Activated naive CD4-positive, alpha-beta T cell treated with anti-CD3 and anti-CD28 coated beads for 36 hours (primary cell): ENCODE measurements at regions of chrX and their contacts with region 1.

Region 1: GRCh38 chrX:16603822-16604221 is 46.1 kb upstream of the S100G start:
- DNase-seq: peak; percentile 31
- H3K4me3 Mint-ChIP-seq: peak overlapping the region; percentile 28
- H3K27ac Mint-ChIP-seq: peak overlapping the region; percentile 82
- H3K4me1 Mint-ChIP-seq: peaks cover 33% of the 10 kb centered on the region
- H3K27me3 Mint-ChIP-seq: no peaks in the 10 kb centered on the region

Region 2: DNA sequence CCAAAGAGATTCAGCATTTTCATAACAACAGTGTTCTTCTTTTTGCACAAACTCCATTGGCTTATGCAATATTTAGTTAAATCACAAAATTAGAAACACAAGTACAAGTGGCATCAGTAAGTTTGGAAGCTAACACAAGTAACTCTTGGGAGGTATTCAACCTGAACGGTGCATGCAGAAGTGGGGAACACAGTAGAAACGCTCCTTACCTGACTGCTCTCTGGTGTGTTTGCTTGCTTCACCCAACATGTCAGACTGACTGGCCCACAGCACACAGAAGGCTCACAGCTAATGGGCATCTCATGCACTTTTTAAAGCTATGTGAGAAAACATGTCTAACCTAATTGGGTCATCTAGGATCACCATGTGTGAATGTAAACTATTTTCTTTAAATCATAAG is 303.0 kb before region 1 on chrX:
- CTCF ChIA-PET with region 1: no interaction called
- intact Hi-C with region 1: no loop called
- DNase-seq: no peak
- H3K4me3 Mint-ChIP-seq: no peak overlapping the region
- H3K27ac Mint-ChIP-seq: no peak overlapping the region
- H3K4me1 Mint-ChIP-seq: no peaks in the 10 kb centered on the region
- H3K27me3 Mint-ChIP-seq: peaks cover 4% of the 10 kb centered on the region

Region 3: GRCh38 chrX:16462912-16463311 is 140.9 kb before region 1 on chrX:
- CTCF ChIA-PET with region 1: no interaction called
- intact Hi-C with region 1: no loop called
- DNase-seq: no peak
- H3K4me3 Mint-ChIP-seq: no peak overlapping the region
- H3K27ac Mint-ChIP-seq: no peak overlapping the region
- H3K4me1 Mint-ChIP-seq: no peaks in the 10 kb centered on the region
- H3K27me3 Mint-ChIP-seq: no peaks in the 10 kb centered on the region

Region 4: DNA sequence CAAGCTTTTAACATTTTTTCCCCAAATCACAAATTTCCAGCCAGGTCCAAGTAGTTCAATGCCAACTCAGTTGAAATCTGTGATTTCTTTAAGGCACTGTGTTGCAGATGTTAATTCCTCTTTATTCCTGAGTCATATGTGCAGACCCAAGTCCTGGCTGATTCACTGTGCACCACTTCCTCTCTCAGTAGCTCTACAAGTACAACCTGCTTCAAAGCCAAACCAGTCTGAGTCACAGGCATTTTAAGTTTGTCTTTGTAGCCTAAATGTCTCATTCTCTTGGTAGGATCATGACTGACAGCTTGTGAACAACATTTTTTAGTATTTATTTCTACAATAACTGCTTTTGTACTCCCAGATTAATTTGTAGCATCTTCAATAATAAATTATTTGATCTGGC is 119.5 kb before region 1 on chrX:
- CTCF ChIA-PET with region 1: no interaction called
- intact Hi-C with region 1: loop called (anchors 1 kb)
- DNase-seq: peak; percentile 66
- H3K4me3 Mint-ChIP-seq: no peak overlapping the region
- H3K27ac Mint-ChIP-seq: no peak overlapping the region
- H3K4me1 Mint-ChIP-seq: peaks cover 34% of the 10 kb centered on the region
- H3K27me3 Mint-ChIP-seq: no peaks in the 10 kb centered on the region

Region 5: GRCh38 chrX:17021851-17022604 is 418.2 kb after region 1 on chrX:
- CTCF ChIA-PET with region 1: no interaction called
- intact Hi-C with region 1: no loop called
- DNase-seq: no peak
- H3K4me3 Mint-ChIP-seq: no peak overlapping the region
- H3K27ac Mint-ChIP-seq: no peak overlapping the region
- H3K4me1 Mint-ChIP-seq: peaks cover 3% of the 10 kb centered on the region
- H3K27me3 Mint-ChIP-seq: no peaks in the 10 kb centered on the region